Ascending aorta (tissue), 2 donors: ENCODE measurements at regions of chr16 and their contacts with region 1.

Region 1: DNA sequence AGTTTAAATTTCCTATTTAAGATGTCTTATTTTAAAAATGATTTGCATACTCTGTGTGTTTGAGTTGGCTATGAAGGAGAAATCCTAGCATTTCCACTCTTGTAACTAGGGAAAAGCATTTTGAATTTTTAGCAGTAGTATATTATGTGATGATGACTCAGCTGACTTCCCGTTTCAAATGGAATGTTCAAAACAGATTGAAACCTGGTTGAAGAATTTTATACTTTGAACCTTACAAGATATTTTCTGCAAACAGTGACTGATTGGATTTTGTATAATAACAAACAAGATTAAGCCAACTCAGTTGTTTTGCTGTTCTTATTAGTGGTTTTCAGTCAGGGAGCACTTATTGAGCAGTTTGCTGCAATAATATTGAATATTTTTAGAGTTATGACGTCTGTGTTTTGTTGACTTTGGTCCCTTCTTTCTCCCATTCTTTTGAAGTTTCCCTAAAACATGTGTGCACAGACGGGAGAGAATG is 8.0 kb downstream of the TNRC6A start:
- DNase-seq: no peak
- H3K4me3 ChIP-seq: peak overlapping the region; percentile 16 to 44
- H3K27ac ChIP-seq: peak overlapping the region; percentile 66 to 81
- H3K4me1 ChIP-seq: peaks cover 13 to 66% of the 10 kb centered on the region in 2 donors
- H3K27me3 ChIP-seq: no peaks in the 10 kb centered on the region
- CTCF ChIP-seq: no peak

Region 2: DNA sequence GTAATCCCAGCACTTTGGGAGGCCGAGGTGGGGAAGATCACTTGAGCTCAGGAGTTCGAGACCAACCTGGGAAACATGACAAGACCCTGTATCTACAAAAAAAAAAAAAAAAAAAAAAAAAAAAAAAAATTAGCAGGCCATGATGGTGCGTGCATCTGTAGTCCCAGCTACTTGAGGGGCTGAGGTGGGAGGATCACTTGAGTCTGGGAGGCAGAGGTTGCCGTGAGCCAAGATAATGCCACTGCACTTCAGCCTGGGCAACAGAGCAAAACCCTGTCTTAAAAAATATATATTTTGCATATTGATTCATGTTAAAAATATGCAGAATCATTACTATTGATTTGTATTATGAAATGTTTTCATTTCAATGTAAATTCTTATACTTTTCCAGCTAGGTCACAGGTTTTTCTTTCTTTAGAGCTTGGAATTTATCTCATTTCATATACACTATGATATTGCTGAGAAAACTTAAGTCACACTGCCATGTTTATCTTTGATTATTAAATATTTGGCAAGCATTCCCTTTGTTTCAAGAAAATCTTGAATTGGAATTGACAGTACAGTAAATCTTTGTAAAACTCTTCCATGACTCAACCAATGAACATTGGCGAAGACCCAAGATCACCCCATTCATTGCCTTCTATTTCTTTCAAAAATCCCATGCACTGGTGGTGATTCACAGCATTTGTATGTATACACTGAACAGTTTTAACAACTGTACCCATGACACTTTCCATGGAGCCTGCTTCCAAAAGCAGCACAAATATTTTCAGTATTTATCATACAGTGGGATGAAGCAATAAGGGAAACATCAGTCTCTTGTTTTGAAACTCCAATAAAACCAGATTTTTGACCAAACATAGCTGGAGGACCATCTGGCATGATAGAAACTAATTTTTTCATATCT is 91.4 kb before region 1 on chr16:
- intact Hi-C with region 1: loop called (anchors 5 kb)
- DNase-seq: peak in 1 of 2 donors; percentile 86
- H3K4me3 ChIP-seq: no peak overlapping the region
- H3K27ac ChIP-seq: peak overlapping the region; percentile 30 to 60
- H3K4me1 ChIP-seq: peaks cover 0 to 10% of the 10 kb centered on the region in 2 donors
- H3K27me3 ChIP-seq: no peaks in the 10 kb centered on the region
- CTCF ChIP-seq: no peak

Region 3: DNA sequence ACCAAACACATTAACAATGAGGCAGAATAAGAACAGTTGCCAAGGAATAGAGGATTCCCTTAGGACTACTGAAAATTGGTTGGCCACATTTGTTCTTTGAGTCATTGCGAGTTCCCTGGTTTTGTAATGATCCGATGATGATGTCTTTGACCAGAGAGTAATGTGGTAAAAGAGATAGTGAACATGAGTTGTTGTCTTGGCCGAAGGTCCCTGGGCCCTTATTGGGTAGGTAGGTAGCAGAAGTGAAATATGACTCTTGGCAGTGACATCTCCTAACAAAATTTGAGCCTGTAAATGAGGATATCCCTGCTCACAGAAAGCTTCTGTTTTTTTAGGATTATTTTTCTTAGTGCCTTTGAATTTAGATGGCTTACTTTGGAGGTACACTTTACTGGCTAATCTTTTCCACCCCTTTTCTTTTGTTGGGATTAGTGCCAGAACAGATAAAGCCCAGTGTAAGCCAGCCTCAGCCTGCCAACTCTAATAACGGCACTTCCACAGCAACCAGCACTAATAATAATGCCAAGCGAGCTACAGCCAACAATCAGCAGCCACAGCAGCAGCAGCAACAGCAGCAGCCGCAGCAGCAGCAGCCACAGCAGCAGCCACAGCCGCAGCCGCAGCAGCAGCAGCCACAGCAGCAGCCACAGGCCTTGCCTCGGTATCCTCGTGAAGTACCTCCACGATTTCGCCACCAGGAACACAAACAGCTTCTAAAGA is 39.2 kb after region 1 on chr16:
- intact Hi-C with region 1: loop called (anchors 5 kb)
- DNase-seq: no peak
- H3K4me3 ChIP-seq: peak overlapping the region in 1 of 2 donors; percentile 25
- H3K27ac ChIP-seq: peak overlapping the region; percentile 64 to 73
- H3K4me1 ChIP-seq: peaks cover 13 to 39% of the 10 kb centered on the region in 2 donors
- H3K27me3 ChIP-seq: no peaks in the 10 kb centered on the region
- CTCF ChIP-seq: no peak